Endothelial cell of umbilical vein (primary cell): ENCODE measurements at regions of chr11 and their contacts with region 1.

Region 1: GRCh38 chr11:130634961-130635473 is 186.6 kb downstream of the ADAMTS15 start:
- DNase-seq: peak; percentile 43
- H3K4me3 ChIP-seq: no peak overlapping the region
- H3K27ac ChIP-seq: no peak overlapping the region
- H3K4me1 ChIP-seq: peaks cover 8% of the 10 kb centered on the region
- H3K27me3 ChIP-seq: no peaks in the 10 kb centered on the region
- CTCF ChIP-seq: no peak
- POLR2A ChIP-seq: no peak

Region 2: GRCh38 chr11:130448416-130449309 is 186.4 kb before region 1 on chr11 and contains the start of gene ADAMTS15:
- CTCF ChIA-PET with region 1: no interaction called
- POLR2A ChIA-PET with region 1: no interaction called
- dilution Hi-C with region 1: no loop called
- intact Hi-C with region 1: loop called (anchors 5 kb)
- DNase-seq: peak; percentile 70
- H3K4me3 ChIP-seq: peak within 1 kb of the TSS in 2 of 3 experiments; percentile 0 to 32
- H3K27ac ChIP-seq: no peak within 1 kb of the TSS
- H3K4me1 ChIP-seq: no peaks in the 10 kb centered on the region
- H3K27me3 ChIP-seq: peaks cover 24 to 25% of the 10 kb centered on the region in 2 experiments
- CTCF ChIP-seq: no peak
- POLR2A ChIP-seq: no peak
- total RNA-seq, gene ADAMTS15: not detected in 2 replicates